Gastrocnemius medialis (tissue), 4 donors: ENCODE measurements at regions of chr3 and their contacts with region 1.

Region 1: GRCh38 chr3:23590424-23591273 is 215.1 kb upstream of the UBE2E1 start:
- DNase-seq: no peak
- ATAC-seq: no peak
- H3K4me3 ChIP-seq: no peak overlapping the region
- H3K27ac ChIP-seq: no peak overlapping the region
- H3K4me1 ChIP-seq: peaks cover 18 to 19% of the 10 kb centered on the region in 2 donors
- H3K27me3 ChIP-seq: no peaks in the 10 kb centered on the region
- CTCF ChIP-seq: no peak
- POLR2A ChIP-seq: no peak

Region 2: GRCh38 chr3:23202921-23203707 is 387.5 kb before region 1 on chr3 and contains the start of gene UBE2E2:
- in situ Hi-C with region 1: no loop called
- intact Hi-C with region 1: loop called (anchors 10 kb)
- DNase-seq: peak; percentile 72 to 78
- ATAC-seq: peak; percentile 75
- H3K4me3 ChIP-seq: peak within 1 kb of the TSS; percentile 67 to 84 (median 78)
- H3K27ac ChIP-seq: peak within 1 kb of the TSS; percentile 90 to 95 (median 92)
- H3K4me1 ChIP-seq: peaks cover 37 to 48% of the 10 kb centered on the region in 2 donors
- H3K27me3 ChIP-seq: no peaks in the 10 kb centered on the region
- CTCF ChIP-seq: no peak
- POLR2A ChIP-seq: peak; percentile 95 to 97
- total RNA-seq, gene UBE2E2: 7.9 to 44.7 (median 26.6) TPM

Region 3: GRCh38 chr3:23253214-23253613 is 337.4 kb before region 1 on chr3:
- in situ Hi-C with region 1: no loop called
- intact Hi-C with region 1: loop called (anchors 10 kb)
- DNase-seq: no peak
- ATAC-seq: no peak
- H3K4me3 ChIP-seq: no peak overlapping the region
- H3K27ac ChIP-seq: no peak overlapping the region
- H3K4me1 ChIP-seq: peaks cover 34 to 50% of the 10 kb centered on the region in 2 donors
- H3K27me3 ChIP-seq: no peaks in the 10 kb centered on the region
- CTCF ChIP-seq: no peak
- POLR2A ChIP-seq: no peak

Region 4: GRCh38 chr3:23304424-23304823 is 286.2 kb before region 1 on chr3:
- in situ Hi-C with region 1: no loop called
- intact Hi-C with region 1: loop called (anchors 10 kb)
- DNase-seq: no peak
- ATAC-seq: no peak
- H3K4me3 ChIP-seq: no peak overlapping the region
- H3K27ac ChIP-seq: peak overlapping the region; percentile 49 to 83 (median 62)
- H3K4me1 ChIP-seq: peaks cover 41 to 52% of the 10 kb centered on the region in 2 donors
- H3K27me3 ChIP-seq: no peaks in the 10 kb centered on the region
- CTCF ChIP-seq: no peak
- POLR2A ChIP-seq: no peak